ENCODE measurements at regions of chr2 and their contacts with region 1.

Region 1: GRCh38 chr2:199042660-199043379 is 414.9 kb downstream of the SATB2 start:
- DNase-seq: no peak
- ATAC-seq: no peak
- H3K4me3 ChIP-seq: no peak overlapping the region
- H3K4me3 Mint-ChIP-seq: no peak overlapping the region
- H3K27ac ChIP-seq: no peak overlapping the region
- H3K27ac Mint-ChIP-seq: no peak overlapping the region
- H3K4me1 ChIP-seq: no peaks in the 10 kb centered on the region
- H3K4me1 Mint-ChIP-seq: no peaks in the 10 kb centered on the region
- H3K27me3 ChIP-seq: no peaks in the 10 kb centered on the region
- H3K27me3 Mint-ChIP-seq: no peaks in the 10 kb centered on the region

Region 2: GRCh38 chr2:197322724-197323720 is 1719.8 kb before region 1 on chr2:
- CTCF ChIA-PET with region 1: no interaction called
- POLR2A ChIA-PET with region 1: no interaction called
- DNase-seq: peak in 10 of 35 experiments; percentile 15 to 54 (median 40)
- ATAC-seq: peak; percentile 83 to 88 (median 84)
- H3K4me3 ChIP-seq: peak overlapping the region in 1 of 2 donors; percentile 15
- H3K4me3 Mint-ChIP-seq: peak overlapping the region; percentile 56 to 77 (median 68)
- H3K27ac ChIP-seq: peak overlapping the region; percentile 87
- H3K27ac Mint-ChIP-seq: peak overlapping the region; percentile 99
- H3K4me1 ChIP-seq: peaks cover 26 to 53% of the 10 kb centered on the region in 2 experiments
- H3K4me1 Mint-ChIP-seq: peaks cover 68 to 77% (median 71%) of the 10 kb centered on the region in 3 donors
- H3K27me3 ChIP-seq: no peaks in the 10 kb centered on the region
- H3K27me3 Mint-ChIP-seq: no peaks in the 10 kb centered on the region

Region 3: DNA sequence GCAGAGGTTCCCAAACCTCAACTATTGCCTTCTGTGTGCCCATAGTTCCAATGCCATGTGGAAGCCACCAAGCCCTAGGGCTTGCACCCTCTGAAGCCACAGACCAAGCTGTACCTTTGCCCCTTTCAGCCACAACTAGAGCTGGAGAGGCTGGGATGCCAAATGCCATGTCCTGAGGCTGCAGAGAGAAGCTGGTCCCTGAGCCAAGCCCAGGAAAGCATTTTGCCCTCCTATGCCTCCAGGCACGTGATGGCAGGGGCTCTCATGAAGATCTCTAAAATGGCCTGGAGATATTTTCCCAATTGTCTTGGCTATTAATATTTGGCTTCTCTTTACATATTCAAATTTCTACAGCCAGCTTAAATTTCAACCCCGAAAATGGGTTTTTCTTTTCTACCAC is 57.3 kb before region 1 on chr2:
- CTCF ChIA-PET with region 1: no interaction called
- POLR2A ChIA-PET with region 1: no interaction called
- DNase-seq: no peak
- ATAC-seq: no peak
- H3K4me3 ChIP-seq: no peak overlapping the region
- H3K4me3 Mint-ChIP-seq: no peak overlapping the region
- H3K27ac ChIP-seq: no peak overlapping the region
- H3K27ac Mint-ChIP-seq: no peak overlapping the region
- H3K4me1 ChIP-seq: no peaks in the 10 kb centered on the region
- H3K4me1 Mint-ChIP-seq: no peaks in the 10 kb centered on the region
- H3K27me3 ChIP-seq: no peaks in the 10 kb centered on the region
- H3K27me3 Mint-ChIP-seq: no peaks in the 10 kb centered on the region

Region 4: GRCh38 chr2:199070322-199070949 is 27.6 kb after region 1 on chr2:
- CTCF ChIA-PET with region 1: no interaction called
- POLR2A ChIA-PET with region 1: no interaction called
- DNase-seq: no peak
- ATAC-seq: no peak
- H3K4me3 ChIP-seq: no peak overlapping the region
- H3K4me3 Mint-ChIP-seq: no peak overlapping the region
- H3K27ac ChIP-seq: no peak overlapping the region
- H3K27ac Mint-ChIP-seq: no peak overlapping the region
- H3K4me1 ChIP-seq: no peaks in the 10 kb centered on the region
- H3K4me1 Mint-ChIP-seq: no peaks in the 10 kb centered on the region
- H3K27me3 ChIP-seq: no peaks in the 10 kb centered on the region
- H3K27me3 Mint-ChIP-seq: no peaks in the 10 kb centered on the region

Region 5: GRCh38 chr2:199100326-199101110 is 57.7 kb after region 1 on chr2:
- CTCF ChIA-PET with region 1: no interaction called
- POLR2A ChIA-PET with region 1: interaction called in 1 of 2 experiments, 11 read pairs
- DNase-seq: no peak
- ATAC-seq: no peak
- H3K4me3 ChIP-seq: no peak overlapping the region
- H3K4me3 Mint-ChIP-seq: no peak overlapping the region
- H3K27ac ChIP-seq: no peak overlapping the region
- H3K27ac Mint-ChIP-seq: no peak overlapping the region
- H3K4me1 ChIP-seq: no peaks in the 10 kb centered on the region
- H3K4me1 Mint-ChIP-seq: no peaks in the 10 kb centered on the region
- H3K27me3 ChIP-seq: no peaks in the 10 kb centered on the region
- H3K27me3 Mint-ChIP-seq: no peaks in the 10 kb centered on the region

Region 6: GRCh38 chr2:200039724-200040650 is 997.2 kb after region 1 on chr2:
- CTCF ChIA-PET with region 1: no interaction called
- POLR2A ChIA-PET with region 1: no interaction called
- DNase-seq: no peak
- ATAC-seq: no peak
- H3K4me3 ChIP-seq: no peak overlapping the region
- H3K4me3 Mint-ChIP-seq: no peak overlapping the region
- H3K27ac ChIP-seq: no peak overlapping the region
- H3K27ac Mint-ChIP-seq: no peak overlapping the region
- H3K4me1 ChIP-seq: no peaks in the 10 kb centered on the region
- H3K4me1 Mint-ChIP-seq: no peaks in the 10 kb centered on the region
- H3K27me3 ChIP-seq: peaks cover 0 to 10% of the 10 kb centered on the region in 2 experiments
- H3K27me3 Mint-ChIP-seq: peaks cover 12 to 15% of the 10 kb centered on the region in 2 donors